ENCODE measurements at regions of chr7 and their contacts with region 1.

Region 1: GRCh38 chr7:40765639-40766038 is 630.8 kb downstream of the SUGCT start:
- DNase-seq: no peak
- H3K4me3 Mint-ChIP-seq: no peak overlapping the region
- H3K27ac Mint-ChIP-seq: no peak overlapping the region
- H3K4me1 Mint-ChIP-seq: no peaks in the 10 kb centered on the region
- H3K27me3 Mint-ChIP-seq: peaks cover 2% of the 10 kb centered on the region

Region 2: DNA sequence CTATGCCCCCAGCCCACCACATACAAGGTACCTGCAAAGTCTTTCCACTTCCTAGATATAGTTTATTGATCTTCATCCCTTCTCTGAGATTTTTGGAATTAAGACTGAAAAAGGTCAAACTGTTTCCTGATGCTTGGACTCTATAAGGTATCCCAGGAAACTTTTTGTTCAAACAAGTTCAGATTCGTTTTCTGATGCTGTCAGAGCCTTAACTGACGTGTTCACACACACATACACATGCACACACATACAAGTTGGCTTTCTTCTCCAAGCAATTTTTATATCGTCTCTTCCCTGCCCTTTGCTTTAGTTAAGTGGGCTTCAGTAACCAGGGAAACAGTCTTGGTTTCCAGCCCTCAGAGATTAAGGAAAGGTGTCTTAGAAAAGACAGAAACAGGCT is 1844.9 kb before region 1 on chr7:
- intact Hi-C with region 1: loop called (anchors 5 kb)
- DNase-seq: no peak
- H3K4me3 Mint-ChIP-seq: no peak overlapping the region
- H3K27ac Mint-ChIP-seq: no peak overlapping the region
- H3K4me1 Mint-ChIP-seq: no peaks in the 10 kb centered on the region
- H3K27me3 Mint-ChIP-seq: peaks cover 7% of the 10 kb centered on the region